Activated CD8-positive, alpha-beta T cell treated with anti-CD3 and anti-CD28 coated beads for 36 hours (primary cell): ENCODE measurements at regions of chr6 and their contacts with region 1.

Region 1: DNA sequence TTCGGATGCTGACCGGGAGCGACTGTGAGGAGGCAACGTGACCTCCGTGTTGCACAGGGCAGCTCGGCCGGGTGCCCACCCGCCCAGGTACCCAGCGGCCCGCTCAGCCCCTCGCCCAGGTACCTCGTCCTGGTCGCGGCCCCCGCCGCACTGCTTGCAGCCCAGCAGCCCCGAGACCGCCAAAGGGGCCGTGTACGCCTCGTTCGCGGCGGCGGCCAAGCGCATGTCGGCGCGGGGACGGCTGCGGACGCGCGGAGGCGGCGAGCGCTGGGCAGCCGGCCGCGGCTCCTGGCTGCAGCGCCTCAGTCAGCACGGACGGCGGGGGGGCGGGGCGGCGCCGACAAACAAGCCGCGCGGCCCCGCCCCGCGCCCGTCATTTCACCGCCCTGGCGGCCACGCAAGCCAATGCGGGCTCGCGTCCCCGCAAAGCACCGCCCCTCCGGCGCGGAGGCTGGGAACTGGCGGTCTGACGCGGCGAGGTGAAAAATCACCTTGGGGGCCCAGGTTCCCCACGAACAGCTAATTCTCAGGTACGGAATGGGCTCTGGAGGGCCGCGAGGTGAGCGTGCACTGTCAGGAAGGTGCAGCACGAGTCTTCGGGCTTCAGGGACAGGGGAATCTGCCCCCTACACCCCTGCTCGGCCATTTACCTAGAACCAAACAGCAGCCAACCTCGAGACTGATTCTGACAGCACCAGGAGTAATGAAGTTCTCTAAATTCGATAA is 85.2 kb downstream of the SESN1 start:
- DNase-seq: peak; percentile 93
- ATAC-seq: peak; percentile 94
- H3K4me3 Mint-ChIP-seq: peak overlapping the region; percentile 94
- H3K27ac Mint-ChIP-seq: peak overlapping the region; percentile 97
- H3K4me1 Mint-ChIP-seq: peaks cover 58% of the 10 kb centered on the region
- H3K27me3 Mint-ChIP-seq: no peaks in the 10 kb centered on the region
- CTCF ChIP-seq: no peak

Region 2: GRCh38 chr6:109059571-109060021 is 50.2 kb after region 1 on chr6:
- CTCF ChIA-PET with region 1: interaction called, 3 read pairs
- POLR2A ChIA-PET with region 1: no interaction called
- intact Hi-C with region 1: loop called (anchors 5 kb)
- DNase-seq: no peak
- ATAC-seq: peak; percentile 96
- H3K4me3 Mint-ChIP-seq: peak overlapping the region; percentile 47
- H3K27ac Mint-ChIP-seq: peak overlapping the region; percentile 92
- H3K4me1 Mint-ChIP-seq: peaks cover 40% of the 10 kb centered on the region
- H3K27me3 Mint-ChIP-seq: no peaks in the 10 kb centered on the region
- CTCF ChIP-seq: no peak